Dendritic cell treated with granulocyte-macrophage colony-stimulating factor and Interleukin-4, amounts not matched to agents 40 ng/mL and 50 ng/mL, for 4 days (primary cell): ENCODE measurements at regions of chr15 and their contacts with region 1.

Region 1: DNA sequence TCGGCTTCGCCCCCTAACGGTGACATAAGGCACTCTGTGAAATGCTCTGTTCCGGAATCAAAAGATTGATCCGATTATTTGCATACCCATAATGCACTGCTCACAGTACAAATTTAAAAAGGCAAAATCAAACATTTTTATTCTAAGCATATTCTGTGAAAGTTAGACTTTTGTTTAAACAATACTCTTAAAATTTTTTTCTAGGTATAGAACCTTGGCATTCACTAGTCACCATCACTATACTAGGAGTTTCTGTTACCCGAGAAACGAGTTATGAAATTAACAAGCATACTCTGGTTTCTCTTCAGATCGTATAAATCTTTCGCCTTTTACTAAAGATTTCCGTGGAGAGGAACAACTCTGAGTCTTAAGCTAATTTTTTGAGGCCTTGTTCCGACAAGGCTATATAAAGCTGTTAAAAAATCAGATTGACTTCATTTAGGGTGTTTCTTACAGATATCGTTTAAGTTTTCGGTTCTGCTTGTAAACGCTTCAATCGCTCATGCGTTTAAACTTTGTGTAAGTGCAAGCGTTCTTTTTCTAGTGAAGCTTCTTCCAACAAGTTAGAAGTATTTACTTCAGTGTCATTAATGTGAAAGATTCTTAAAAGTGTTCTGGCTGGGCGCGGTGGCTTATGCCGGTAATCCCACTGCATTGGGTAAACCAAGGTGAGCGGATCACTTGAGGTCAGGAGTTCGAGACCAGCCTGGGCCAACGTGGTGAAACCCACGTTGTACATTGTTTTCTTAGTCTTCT is at the start of gene RNU5B-1:
- H3K4me3 Mint-ChIP-seq: peak within 1 kb of the TSS; percentile 81
- H3K27ac Mint-ChIP-seq: peak within 1 kb of the TSS; percentile 98
- H3K4me1 Mint-ChIP-seq: peaks cover 10% of the 10 kb centered on the region
- H3K27me3 Mint-ChIP-seq: no peaks in the 10 kb centered on the region

Region 2: GRCh38 chr15:64989416-64990167 is 315.0 kb before region 1 on chr15 and contains the start of gene SPG21:
- intact Hi-C with region 1: no loop called
- H3K4me3 Mint-ChIP-seq: peak within 1 kb of the TSS; percentile 95
- H3K27ac Mint-ChIP-seq: peak within 1 kb of the TSS; percentile 93
- H3K4me1 Mint-ChIP-seq: peaks cover 53% of the 10 kb centered on the region
- H3K27me3 Mint-ChIP-seq: no peaks in the 10 kb centered on the region

Region 3: GRCh38 chr15:65184868-65185738 is 119.5 kb before region 1 on chr15 and contains the start of gene CLPX:
- intact Hi-C with region 1: loop called (anchors 2 kb)
- H3K4me3 Mint-ChIP-seq: peak within 1 kb of the TSS; percentile 92
- H3K27ac Mint-ChIP-seq: peak within 1 kb of the TSS; percentile 94
- H3K4me1 Mint-ChIP-seq: peaks cover 24% of the 10 kb centered on the region
- H3K27me3 Mint-ChIP-seq: no peaks in the 10 kb centered on the region

Region 4: GRCh38 chr15:65292938-65293518 is 11.5 kb before region 1 on chr15:
- intact Hi-C with region 1: loop called (anchors 1 kb)
- H3K4me3 Mint-ChIP-seq: no peak overlapping the region
- H3K27ac Mint-ChIP-seq: no peak overlapping the region
- H3K4me1 Mint-ChIP-seq: peaks cover 11% of the 10 kb centered on the region
- H3K27me3 Mint-ChIP-seq: no peaks in the 10 kb centered on the region

Region 5: GRCh38 chr15:65466901-65467300 is 162.3 kb after region 1 on chr15:
- intact Hi-C with region 1: no loop called
- H3K4me3 Mint-ChIP-seq: no peak overlapping the region
- H3K27ac Mint-ChIP-seq: no peak overlapping the region
- H3K4me1 Mint-ChIP-seq: no peaks in the 10 kb centered on the region
- H3K27me3 Mint-ChIP-seq: no peaks in the 10 kb centered on the region